ENCODE measurements at regions of chr4 and their contacts with region 1.

Region 1: GRCh38 chr4:124322234-124323065 is 390.1 kb downstream of the ANKRD50 start:
- DNase-seq: peak; percentile 11
- CTCF ChIP-seq: peak; percentile 34

Region 2: DNA sequence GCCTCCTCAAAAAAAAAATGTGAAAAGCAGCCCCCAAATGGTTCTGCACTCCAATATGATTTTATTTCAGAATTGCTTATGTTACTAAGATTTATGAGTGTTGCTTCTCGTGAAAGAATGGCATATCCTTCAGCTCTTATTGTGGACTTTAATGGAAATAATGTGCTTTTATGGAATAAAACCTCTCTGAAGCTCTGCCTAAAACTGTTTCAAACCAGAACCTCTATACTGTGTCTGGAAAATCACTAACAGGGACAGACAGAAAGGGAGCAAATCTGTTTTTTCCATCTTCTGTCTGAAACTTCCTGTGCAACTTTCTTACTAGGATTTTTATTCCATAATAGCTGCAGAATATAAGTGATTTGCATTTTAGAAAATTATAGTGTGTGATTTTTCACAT is 103.1 kb before region 1 on chr4:
- CTCF ChIA-PET with region 1: no interaction called
- POLR2A ChIA-PET with region 1: no interaction called
- DNase-seq: no peak
- CTCF ChIP-seq: no peak

Region 3: GRCh38 chr4:124334119-124334518 is 11.7 kb after region 1 on chr4:
- CTCF ChIA-PET with region 1: interaction called, 19 read pairs
- POLR2A ChIA-PET with region 1: no interaction called
- DNase-seq: no peak
- CTCF ChIP-seq: peak; percentile 39